ENCODE measurements at regions of chr2 and their contacts with region 1.

Region 1: DNA sequence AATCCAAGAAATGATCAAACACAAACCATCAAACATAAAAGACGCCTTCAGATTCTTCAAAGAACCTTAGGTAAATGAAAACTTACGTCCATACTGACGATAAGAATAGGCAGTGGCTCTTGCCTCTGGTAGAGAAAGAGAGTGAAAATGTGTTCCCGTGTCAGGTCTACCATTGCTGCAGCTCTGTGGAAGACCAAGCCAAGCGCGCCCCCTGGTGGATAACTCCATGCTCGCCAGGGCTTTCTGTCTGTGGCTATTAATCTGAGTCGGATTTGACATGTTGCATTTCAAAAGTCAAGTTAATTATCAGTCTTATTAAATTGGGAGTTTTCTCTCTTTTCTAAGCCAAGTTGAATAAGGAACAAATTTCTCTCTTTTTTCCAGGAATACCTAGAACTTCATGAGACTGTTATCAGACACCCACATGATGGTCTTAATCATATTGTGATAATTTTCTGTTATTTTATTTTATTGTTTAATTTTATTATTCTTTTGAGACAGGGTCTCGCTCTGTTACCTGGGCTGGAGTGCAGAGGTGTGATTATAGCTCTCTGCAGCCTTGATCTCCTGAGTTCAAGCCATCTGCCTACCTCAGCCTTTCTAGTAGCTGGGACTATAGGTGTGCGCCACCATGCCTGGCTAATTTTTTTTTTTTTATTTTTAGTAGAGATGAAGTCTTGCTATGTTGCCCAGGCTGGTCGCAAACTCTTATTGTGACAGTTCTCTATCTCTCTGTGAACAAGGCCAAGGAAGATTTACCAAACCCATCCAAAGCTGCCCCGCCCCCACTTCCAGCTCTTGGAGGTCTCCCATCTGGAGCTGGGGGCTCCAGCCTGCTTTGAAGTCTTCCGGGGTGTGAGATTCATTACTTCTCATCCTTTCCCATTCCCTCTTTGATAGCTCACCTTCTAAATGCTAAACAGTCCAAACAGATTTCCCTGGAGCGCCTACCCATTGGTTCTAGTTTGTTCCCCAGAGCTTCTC is 15.8 kb upstream of the ZAP70 start:
- DNase-seq: peak; percentile 89
- ATAC-seq: peak; percentile 91
- H3K4me3 ChIP-seq: no peak overlapping the region
- H3K4me3 Mint-ChIP-seq: peak overlapping the region; percentile 13
- H3K27ac ChIP-seq: no peak overlapping the region
- H3K27ac Mint-ChIP-seq: no peak overlapping the region
- H3K4me1 ChIP-seq: peaks cover 0 to 3% of the 10 kb centered on the region in 2 donors
- H3K4me1 Mint-ChIP-seq: peaks cover 5% of the 10 kb centered on the region
- H3K27me3 ChIP-seq: no peaks in the 10 kb centered on the region
- H3K27me3 Mint-ChIP-seq: no peaks in the 10 kb centered on the region
- CTCF ChIP-seq: peak; percentile 98

Region 2: GRCh38 chr2:97617911-97618310 is 79.6 kb before region 1 on chr2:
- CTCF ChIA-PET with region 1: no interaction called
- POLR2A ChIA-PET with region 1: no interaction called
- intact Hi-C with region 1: no loop called
- DNase-seq: no peak
- ATAC-seq: no peak
- H3K4me3 ChIP-seq: no peak overlapping the region
- H3K4me3 Mint-ChIP-seq: no peak overlapping the region
- H3K27ac ChIP-seq: no peak overlapping the region
- H3K27ac Mint-ChIP-seq: no peak overlapping the region
- H3K4me1 ChIP-seq: no peaks in the 10 kb centered on the region
- H3K4me1 Mint-ChIP-seq: no peaks in the 10 kb centered on the region
- H3K27me3 ChIP-seq: no peaks in the 10 kb centered on the region
- H3K27me3 Mint-ChIP-seq: peaks cover 6% of the 10 kb centered on the region
- CTCF ChIP-seq: no peak

Region 3: GRCh38 chr2:97645695-97646629 is 51.6 kb before region 1 on chr2 and contains the start of gene COX5B:
- CTCF ChIA-PET with region 1: interaction called, 16 read pairs
- POLR2A ChIA-PET with region 1: no interaction called
- intact Hi-C with region 1: loop called (anchors 1 kb)
- DNase-seq: peak; percentile 98
- ATAC-seq: peak; percentile 98
- H3K4me3 ChIP-seq: peak within 1 kb of the TSS; percentile 61 to 97 (median 97)
- H3K4me3 Mint-ChIP-seq: peak within 1 kb of the TSS; percentile 100
- H3K27ac ChIP-seq: peak within 1 kb of the TSS; percentile 72 to 87
- H3K27ac Mint-ChIP-seq: peak within 1 kb of the TSS; percentile 97
- H3K4me1 ChIP-seq: peaks cover 14 to 15% of the 10 kb centered on the region in 2 donors
- H3K4me1 Mint-ChIP-seq: peaks cover 21% of the 10 kb centered on the region
- H3K27me3 ChIP-seq: no peaks in the 10 kb centered on the region
- H3K27me3 Mint-ChIP-seq: peaks cover 3% of the 10 kb centered on the region
- CTCF ChIP-seq: no peak
- total RNA-seq, gene COX5B: 104 and 111 TPM in 2 replicates

Region 4: GRCh38 chr2:97663965-97664635 is 33.4 kb before region 1 on chr2 and contains the start of gene ACTR1B:
- CTCF ChIA-PET with region 1: interaction called, 53 read pairs
- POLR2A ChIA-PET with region 1: no interaction called
- intact Hi-C with region 1: loop called (anchors 1 kb)
- DNase-seq: peak; percentile 99
- ATAC-seq: peak; percentile 91
- H3K4me3 ChIP-seq: peak within 1 kb of the TSS; percentile 71 to 96 (median 84)
- H3K4me3 Mint-ChIP-seq: peak within 1 kb of the TSS; percentile 96
- H3K27ac ChIP-seq: peak within 1 kb of the TSS; percentile 82 to 97
- H3K27ac Mint-ChIP-seq: peak within 1 kb of the TSS; percentile 97
- H3K4me1 ChIP-seq: peaks cover 23 to 32% of the 10 kb centered on the region in 2 donors
- H3K4me1 Mint-ChIP-seq: peaks cover 33% of the 10 kb centered on the region
- H3K27me3 ChIP-seq: no peaks in the 10 kb centered on the region
- H3K27me3 Mint-ChIP-seq: no peaks in the 10 kb centered on the region
- CTCF ChIP-seq: peak; percentile 72
- total RNA-seq, gene ACTR1B: 69.0 and 70.2 TPM in 2 replicates

Region 5: GRCh38 chr2:97718051-97718882 is 20.7 kb after region 1 on chr2:
- CTCF ChIA-PET with region 1: interaction called, 55 read pairs
- POLR2A ChIA-PET with region 1: no interaction called
- intact Hi-C with region 1: no loop called
- DNase-seq: peak; percentile 63
- ATAC-seq: peak; percentile 90
- H3K4me3 ChIP-seq: peak overlapping the region in 4 of 5 experiments; percentile 7 to 48 (median 28)
- H3K4me3 Mint-ChIP-seq: peak overlapping the region; percentile 89
- H3K27ac ChIP-seq: peak overlapping the region; percentile 53 to 60
- H3K27ac Mint-ChIP-seq: peak overlapping the region; percentile 96
- H3K4me1 ChIP-seq: peaks cover 26 to 27% of the 10 kb centered on the region in 2 donors
- H3K4me1 Mint-ChIP-seq: peaks cover 38% of the 10 kb centered on the region
- H3K27me3 ChIP-seq: no peaks in the 10 kb centered on the region
- H3K27me3 Mint-ChIP-seq: no peaks in the 10 kb centered on the region
- CTCF ChIP-seq: no peak

Region 6: DNA sequence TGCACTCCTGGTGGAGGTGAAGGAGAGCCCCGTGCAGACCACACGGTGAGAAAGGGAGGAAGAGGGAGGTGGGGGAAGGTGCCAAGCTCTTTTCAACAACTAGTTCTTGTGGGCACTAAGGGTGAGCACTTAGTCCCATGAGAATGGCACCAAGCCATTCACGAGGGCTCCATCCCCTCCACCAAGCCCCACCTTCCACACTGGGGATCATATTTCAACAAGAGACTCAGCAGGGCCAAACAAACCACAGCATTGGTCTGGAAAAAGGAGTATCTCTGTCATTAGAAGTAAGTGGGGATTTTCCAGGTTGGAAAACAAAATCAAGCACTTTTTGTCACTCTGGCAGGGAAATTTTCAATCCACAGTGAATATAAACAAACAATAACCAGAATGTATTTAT is 54.2 kb after region 1 on chr2:
- CTCF ChIA-PET with region 1: interaction called, 11 read pairs
- POLR2A ChIA-PET with region 1: no interaction called
- intact Hi-C with region 1: loop called (anchors 1 kb)
- DNase-seq: no peak
- ATAC-seq: no peak
- H3K4me3 ChIP-seq: no peak overlapping the region
- H3K4me3 Mint-ChIP-seq: no peak overlapping the region
- H3K27ac ChIP-seq: no peak overlapping the region
- H3K27ac Mint-ChIP-seq: peak overlapping the region; percentile 62
- H3K4me1 ChIP-seq: peaks cover 10 to 12% of the 10 kb centered on the region in 2 donors
- H3K4me1 Mint-ChIP-seq: peaks cover 17% of the 10 kb centered on the region
- H3K27me3 ChIP-seq: no peaks in the 10 kb centered on the region
- H3K27me3 Mint-ChIP-seq: no peaks in the 10 kb centered on the region
- CTCF ChIP-seq: no peak

Region 7: GRCh38 chr2:98188351-98189049 is 491.0 kb after region 1 on chr2:
- CTCF ChIA-PET with region 1: interaction called, 13 read pairs
- POLR2A ChIA-PET with region 1: no interaction called
- intact Hi-C with region 1: loop called (anchors 5 kb)
- DNase-seq: peak; percentile 42
- ATAC-seq: no peak
- H3K4me3 ChIP-seq: no peak overlapping the region
- H3K4me3 Mint-ChIP-seq: no peak overlapping the region
- H3K27ac ChIP-seq: no peak overlapping the region
- H3K27ac Mint-ChIP-seq: no peak overlapping the region
- H3K4me1 ChIP-seq: no peaks in the 10 kb centered on the region
- H3K4me1 Mint-ChIP-seq: no peaks in the 10 kb centered on the region
- H3K27me3 ChIP-seq: no peaks in the 10 kb centered on the region
- H3K27me3 Mint-ChIP-seq: peaks cover 5% of the 10 kb centered on the region
- CTCF ChIP-seq: peak; percentile 15

Region 8: DNA sequence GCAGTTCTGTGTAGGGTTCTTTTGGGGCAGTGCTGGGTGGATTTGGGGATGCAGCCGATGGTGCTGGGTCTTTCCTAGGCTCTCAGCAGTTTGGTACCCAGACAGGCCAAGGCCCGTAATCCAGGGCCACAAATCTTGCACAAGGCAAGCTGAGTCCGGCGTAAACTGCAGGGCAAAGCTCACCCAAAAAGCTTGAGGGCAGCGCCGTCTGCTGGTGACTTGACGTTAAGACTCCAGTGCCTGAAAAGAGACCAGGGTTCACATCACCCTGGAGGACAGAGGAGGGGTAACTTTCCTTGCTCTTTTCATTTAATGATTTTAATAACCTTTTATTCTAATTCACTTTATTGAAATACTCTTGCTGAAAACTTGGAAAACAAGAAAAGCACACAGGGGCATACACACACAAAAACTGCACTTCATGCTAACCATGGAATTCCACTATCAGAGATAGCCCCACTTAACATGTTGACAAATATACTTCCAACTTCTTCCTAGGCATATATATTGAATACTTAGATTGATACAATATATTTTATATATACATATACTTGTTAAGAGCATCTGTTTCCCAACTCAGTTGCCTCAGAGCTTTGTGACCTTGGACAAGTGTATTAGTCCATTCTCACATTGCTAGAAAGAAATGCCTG is 687.6 kb after region 1 on chr2:
- CTCF ChIA-PET with region 1: interaction called, 31 read pairs
- POLR2A ChIA-PET with region 1: no interaction called
- intact Hi-C with region 1: loop called (anchors 1 kb)
- DNase-seq: peak; percentile 78
- ATAC-seq: peak; percentile 88
- H3K4me3 ChIP-seq: no peak overlapping the region
- H3K4me3 Mint-ChIP-seq: no peak overlapping the region
- H3K27ac ChIP-seq: no peak overlapping the region
- H3K27ac Mint-ChIP-seq: no peak overlapping the region
- H3K4me1 ChIP-seq: peaks cover 0 to 2% of the 10 kb centered on the region in 2 donors
- H3K4me1 Mint-ChIP-seq: no peaks in the 10 kb centered on the region
- H3K27me3 ChIP-seq: no peaks in the 10 kb centered on the region
- H3K27me3 Mint-ChIP-seq: peaks cover 14% of the 10 kb centered on the region
- CTCF ChIP-seq: peak; percentile 94

Measured in B cell (primary cell).